Dendritic cell treated with granulocyte-macrophage colony-stimulating factor and Interleukin-4, amounts not matched to agents 40 ng/mL and 50 ng/mL, for 4 days (primary cell): ENCODE measurements at regions of chr16 and their contacts with region 1.

Region 1: GRCh38 chr16:53323924-53324323 is 110.3 kb upstream of the RBL2 start:
- H3K4me3 Mint-ChIP-seq: no peak overlapping the region
- H3K27ac Mint-ChIP-seq: no peak overlapping the region
- H3K4me1 Mint-ChIP-seq: peaks cover 8% of the 10 kb centered on the region
- H3K27me3 Mint-ChIP-seq: no peaks in the 10 kb centered on the region

Region 2: DNA sequence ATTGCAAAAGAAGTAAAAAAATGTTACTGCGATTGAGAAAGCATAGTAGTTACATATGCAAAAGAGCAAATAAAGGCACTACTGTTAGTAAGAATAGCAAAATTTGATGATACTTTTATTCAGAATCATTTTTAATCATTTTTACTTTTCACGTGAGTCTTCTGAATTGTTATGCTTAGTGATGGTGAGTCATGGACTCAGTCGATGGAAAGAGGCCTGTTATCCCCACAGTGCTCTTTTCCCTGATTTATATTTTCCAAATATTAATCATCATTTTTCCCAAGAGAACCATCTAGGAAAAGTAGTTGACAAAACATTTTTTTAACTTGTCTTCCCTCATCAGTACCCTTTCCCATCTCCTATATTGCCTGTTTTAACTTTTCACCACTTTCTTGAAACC is 88.1 kb before region 1 on chr16:
- intact Hi-C with region 1: loop called (anchors 5 kb)
- H3K4me3 Mint-ChIP-seq: no peak overlapping the region
- H3K27ac Mint-ChIP-seq: no peak overlapping the region
- H3K4me1 Mint-ChIP-seq: no peaks in the 10 kb centered on the region
- H3K27me3 Mint-ChIP-seq: no peaks in the 10 kb centered on the region

Region 3: DNA sequence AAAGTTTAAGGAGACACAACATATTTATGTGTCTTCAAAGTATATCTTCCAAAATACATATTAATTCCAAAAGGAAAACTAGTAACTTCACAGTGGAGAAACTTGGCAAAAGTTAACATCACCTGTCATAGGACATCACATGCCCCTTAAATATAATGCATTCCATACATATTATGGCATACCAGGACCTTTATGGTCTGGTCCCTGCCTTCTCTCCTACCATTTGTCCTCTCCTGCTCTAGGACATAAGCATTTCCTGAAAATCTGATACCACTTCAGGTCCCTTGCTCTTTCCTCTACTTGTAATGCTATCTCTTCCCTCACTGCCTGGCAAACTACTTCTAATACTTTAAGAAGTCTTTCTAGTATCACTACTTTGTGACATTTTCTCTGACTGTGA is 57.8 kb before region 1 on chr16:
- intact Hi-C with region 1: loop called (anchors 10 kb)
- H3K4me3 Mint-ChIP-seq: no peak overlapping the region
- H3K27ac Mint-ChIP-seq: no peak overlapping the region
- H3K4me1 Mint-ChIP-seq: no peaks in the 10 kb centered on the region
- H3K27me3 Mint-ChIP-seq: no peaks in the 10 kb centered on the region

Region 4: DNA sequence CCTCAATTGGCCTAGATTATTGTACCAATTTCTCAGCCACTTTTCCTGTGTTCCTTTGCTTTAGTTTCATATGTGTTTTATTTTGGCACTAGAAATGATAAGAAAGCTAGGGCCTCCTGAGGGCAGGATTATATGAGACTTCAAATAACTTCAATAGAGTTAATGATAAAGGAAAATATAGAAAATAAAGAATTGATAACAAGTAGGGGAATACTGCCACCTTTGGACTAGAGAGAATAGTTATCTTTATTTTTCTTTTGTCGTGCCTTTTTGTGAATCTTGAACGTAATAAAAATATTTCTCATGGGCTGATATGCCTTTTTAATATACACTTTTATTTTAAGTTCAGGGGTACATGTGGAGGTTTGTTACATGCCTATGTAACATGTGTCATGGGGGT is 81.0 kb after region 1 on chr16:
- intact Hi-C with region 1: no loop called
- H3K4me3 Mint-ChIP-seq: no peak overlapping the region
- H3K27ac Mint-ChIP-seq: no peak overlapping the region
- H3K4me1 Mint-ChIP-seq: no peaks in the 10 kb centered on the region
- H3K27me3 Mint-ChIP-seq: peaks cover 1% of the 10 kb centered on the region

Region 5: GRCh38 chr16:53457670-53458069 is 133.7 kb after region 1 on chr16:
- intact Hi-C with region 1: loop called (anchors 10 kb)
- H3K4me3 Mint-ChIP-seq: no peak overlapping the region
- H3K27ac Mint-ChIP-seq: no peak overlapping the region
- H3K4me1 Mint-ChIP-seq: no peaks in the 10 kb centered on the region
- H3K27me3 Mint-ChIP-seq: no peaks in the 10 kb centered on the region